Astrocyte of the cerebellum (primary cell): ENCODE measurements at regions of chr6 and their contacts with region 1.

Region 1: GRCh38 chr6:111992851-111993250 is 61.1 kb upstream of the CCN6 start:
- DNase-seq: no peak
- H3K4me3 ChIP-seq: no peak overlapping the region
- CTCF ChIP-seq: no peak

Region 2: DNA sequence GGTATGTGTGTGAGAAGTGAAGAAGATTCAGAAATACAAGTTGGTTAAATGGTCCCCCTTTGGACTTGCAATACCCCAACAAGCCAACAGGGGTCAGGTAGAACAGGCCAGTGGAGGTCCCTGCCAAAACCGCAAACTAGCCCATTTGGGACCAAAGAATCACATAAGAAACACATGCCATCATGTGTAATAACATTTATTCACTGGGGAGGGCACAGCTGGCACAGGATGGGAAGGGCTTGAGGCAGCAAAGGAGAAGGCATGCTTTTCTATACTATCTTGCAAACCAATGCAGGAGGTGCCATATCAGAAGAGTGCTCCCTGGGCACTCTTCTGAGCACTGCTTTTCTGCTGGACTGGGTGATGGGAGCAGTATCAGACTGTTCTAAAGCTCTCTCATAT is 271.1 kb before region 1 on chr6:
- in situ Hi-C with region 1: loop called (anchors 5 kb)
- DNase-seq: no peak
- H3K4me3 ChIP-seq: no peak overlapping the region
- CTCF ChIP-seq: peak; percentile 62

Region 3: GRCh38 chr6:111743862-111744692 is 248.8 kb before region 1 on chr6:
- in situ Hi-C with region 1: no loop called
- DNase-seq: no peak
- H3K4me3 ChIP-seq: no peak overlapping the region
- CTCF ChIP-seq: no peak

Region 4: DNA sequence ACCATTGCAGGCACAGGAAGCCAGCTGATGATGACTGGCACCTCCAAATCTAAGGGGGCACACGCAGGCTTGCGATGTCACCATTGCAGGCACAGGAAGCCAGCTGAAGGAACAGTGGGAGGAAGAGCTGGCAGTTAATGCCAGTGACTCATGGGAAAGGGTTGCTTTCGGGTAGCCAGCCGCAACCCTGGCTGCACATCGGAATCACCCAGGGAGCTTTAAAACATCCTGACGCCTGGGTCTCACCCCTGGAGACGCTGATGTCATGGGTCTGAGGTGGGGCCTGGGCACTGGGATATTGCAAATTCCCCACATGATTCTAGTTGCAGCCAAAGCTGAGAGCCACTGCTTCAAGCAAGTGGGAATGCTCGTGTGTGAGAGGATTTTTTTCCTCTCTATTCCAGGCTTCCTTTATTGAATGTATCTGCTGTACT is 44.9 kb after region 1 on chr6:
- in situ Hi-C with region 1: loop called (anchors 5 kb)
- DNase-seq: peak; percentile 88
- H3K4me3 ChIP-seq: no peak overlapping the region
- CTCF ChIP-seq: no peak